ENCODE measurements at regions of chr11 and their contacts with region 1.

Region 1: GRCh38 chr11:10808553-10809372 is at the start of gene EIF4G2:
- DNase-seq: peak; percentile 99
- H3K4me3 ChIP-seq: peak within 1 kb of the TSS; percentile 95 to 99 (median 95)
- H3K4me3 Mint-ChIP-seq: peak within 1 kb of the TSS; percentile 96 to 97
- H3K27ac ChIP-seq: peak within 1 kb of the TSS; percentile 95 to 97
- H3K27ac Mint-ChIP-seq: peak within 1 kb of the TSS; percentile 95 to 99 (median 97)
- H3K4me1 ChIP-seq: peaks cover 27 to 43% of the 10 kb centered on the region in 2 donors
- H3K4me1 Mint-ChIP-seq: peaks cover 32% of the 10 kb centered on the region
- H3K27me3 ChIP-seq: no peaks in the 10 kb centered on the region
- H3K27me3 Mint-ChIP-seq: no peaks in the 10 kb centered on the region
- CTCF ChIP-seq: no peak
- polyA plus RNA-seq, gene EIF4G2: 334 to 439 (median 386) TPM

Region 2: GRCh38 chr11:10526974-10527918 is 281.5 kb before region 1 on chr11:
- intact Hi-C with region 1: no loop called
- DNase-seq: no peak
- H3K4me3 ChIP-seq: no peak overlapping the region
- H3K4me3 Mint-ChIP-seq: no peak overlapping the region
- H3K27ac ChIP-seq: no peak overlapping the region
- H3K27ac Mint-ChIP-seq: peak overlapping the region in 3 of 7 donors; percentile 3 to 12 (median 6)
- H3K4me1 ChIP-seq: no peaks in the 10 kb centered on the region
- H3K4me1 Mint-ChIP-seq: no peaks in the 10 kb centered on the region
- H3K27me3 ChIP-seq: no peaks in the 10 kb centered on the region
- H3K27me3 Mint-ChIP-seq: no peaks in the 10 kb centered on the region
- CTCF ChIP-seq: no peak

Region 3: DNA sequence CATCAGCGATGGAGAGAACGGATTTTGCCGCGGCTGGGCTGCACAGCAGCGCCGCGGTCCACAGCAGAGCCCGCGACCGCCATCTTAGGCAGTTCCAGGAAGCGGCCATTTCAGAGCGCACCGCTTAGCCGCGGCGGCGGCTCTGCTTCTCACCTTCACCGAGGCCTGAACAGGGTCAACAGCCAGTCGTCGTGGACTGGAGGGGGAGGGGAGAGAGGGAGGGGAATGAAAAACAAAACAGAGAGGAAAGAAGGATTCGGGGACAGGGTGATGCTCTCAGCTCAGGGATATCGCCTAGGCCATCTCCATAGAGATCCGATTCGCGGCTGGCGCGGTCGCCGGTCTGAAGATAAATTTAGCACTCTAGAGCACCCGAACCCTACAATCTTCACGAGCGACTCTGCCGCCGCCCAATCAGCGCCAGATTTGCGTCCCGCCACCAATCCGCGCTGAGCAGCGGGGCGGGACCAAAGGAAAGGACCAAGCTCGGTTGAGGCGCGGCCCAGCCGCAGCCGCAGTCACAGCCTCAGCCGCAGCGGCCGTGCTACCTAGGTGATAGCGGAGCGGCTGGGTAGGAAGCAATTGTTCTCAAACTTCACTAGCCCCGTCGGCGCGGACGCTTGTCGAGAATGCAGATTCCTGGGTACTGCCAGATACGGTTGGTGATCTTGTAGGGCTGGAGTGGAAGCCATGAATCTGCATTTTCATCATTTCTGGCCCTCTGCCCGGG is 49.1 kb after region 1 on chr11 and contains the start of gene ZBED5:
- intact Hi-C with region 1: loop called (anchors 2 to 5 kb)
- DNase-seq: peak; percentile 93 to 96 (median 94)
- H3K4me3 ChIP-seq: peak within 1 kb of the TSS; percentile 78 to 91 (median 91)
- H3K4me3 Mint-ChIP-seq: peak within 1 kb of the TSS; percentile 98 to 100
- H3K27ac ChIP-seq: peak within 1 kb of the TSS; percentile 94 to 95
- H3K27ac Mint-ChIP-seq: peak within 1 kb of the TSS; percentile 99 to 100 (median 99)
- H3K4me1 ChIP-seq: peaks cover 20 to 30% of the 10 kb centered on the region in 2 donors
- H3K4me1 Mint-ChIP-seq: peaks cover 21% of the 10 kb centered on the region
- H3K27me3 ChIP-seq: no peaks in the 10 kb centered on the region
- H3K27me3 Mint-ChIP-seq: peaks cover 0 to 3% (median 0%) of the 10 kb centered on the region in 3 donors
- CTCF ChIP-seq: no peak
- polyA plus RNA-seq, gene ZBED5: 8.1 to 45.8 (median 10.3) TPM

Region 4: GRCh38 chr11:10899121-10899830 is 90.5 kb after region 1 on chr11:
- intact Hi-C with region 1: loop called in 1 of 2 experiments (anchors 2 kb)
- DNase-seq: peak; percentile 54 to 86 (median 71)
- H3K4me3 ChIP-seq: peak overlapping the region in 1 of 3 experiments; percentile 28
- H3K4me3 Mint-ChIP-seq: peak overlapping the region; percentile 41 to 46
- H3K27ac ChIP-seq: peak overlapping the region; percentile 89 to 100
- H3K27ac Mint-ChIP-seq: peak overlapping the region; percentile 99 to 100 (median 99)
- H3K4me1 ChIP-seq: peaks cover 57 to 65% of the 10 kb centered on the region in 2 donors
- H3K4me1 Mint-ChIP-seq: peaks cover 61% of the 10 kb centered on the region
- H3K27me3 ChIP-seq: no peaks in the 10 kb centered on the region
- H3K27me3 Mint-ChIP-seq: peaks cover 0 to 7% (median 2%) of the 10 kb centered on the region in 3 donors
- CTCF ChIP-seq: no peak

Region 5: GRCh38 chr11:11841723-11842420 is 1033.1 kb after region 1 on chr11 and contains the start of gene USP47:
- intact Hi-C with region 1: loop called in 1 of 2 experiments (anchors 10 kb)
- DNase-seq: peak; percentile 80 to 85 (median 84)
- H3K4me3 ChIP-seq: peak within 1 kb of the TSS; percentile 80 to 97 (median 94)
- H3K4me3 Mint-ChIP-seq: no peak within 1 kb of the TSS
- H3K27ac ChIP-seq: peak within 1 kb of the TSS; percentile 96 to 97
- H3K27ac Mint-ChIP-seq: no peak within 1 kb of the TSS
- H3K4me1 ChIP-seq: peaks cover 20 to 30% of the 10 kb centered on the region in 2 donors
- H3K4me1 Mint-ChIP-seq: peaks cover 21% of the 10 kb centered on the region
- H3K27me3 ChIP-seq: peaks cover 0 to 2% of the 10 kb centered on the region in 2 donors
- H3K27me3 Mint-ChIP-seq: no peaks in the 10 kb centered on the region
- CTCF ChIP-seq: peak; percentile 6
- polyA plus RNA-seq, gene USP47: 8.1 to 17.5 (median 10.5) TPM

Measured in CD14-positive monocyte (primary cell).